Ovary (tissue), 10 donors: ENCODE measurements at regions of chrX and their contacts with region 1.

Region 1: DNA sequence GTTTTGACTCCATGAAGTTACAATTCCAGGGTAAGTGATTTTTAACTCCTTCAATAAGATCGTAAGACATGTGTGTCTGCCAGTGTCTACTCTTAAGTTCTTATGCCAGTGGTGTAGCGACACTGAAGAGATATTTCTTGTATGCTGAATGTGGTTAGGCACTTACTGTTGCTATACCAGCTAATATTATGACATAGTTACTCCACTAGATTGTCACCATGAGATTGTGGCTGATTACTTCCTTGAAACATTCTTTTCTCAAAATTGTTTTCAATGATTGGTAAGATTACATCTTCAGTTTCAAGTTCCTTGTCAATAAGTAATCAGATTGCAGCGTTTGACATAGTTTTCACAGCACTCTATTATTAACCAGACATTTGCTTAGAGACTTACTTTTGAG is 60.6 kb upstream of the PAGE5 start:
- DNase-seq: no peak
- H3K4me3 ChIP-seq: no peak overlapping the region
- H3K27ac ChIP-seq: no peak overlapping the region
- H3K4me1 ChIP-seq: no peaks in the 10 kb centered on the region
- H3K27me3 ChIP-seq: no peaks in the 10 kb centered on the region
- CTCF ChIP-seq: no peak
- EP300 ChIP-seq: no peak
- POLR2A ChIP-seq: no peak

Region 2: DNA sequence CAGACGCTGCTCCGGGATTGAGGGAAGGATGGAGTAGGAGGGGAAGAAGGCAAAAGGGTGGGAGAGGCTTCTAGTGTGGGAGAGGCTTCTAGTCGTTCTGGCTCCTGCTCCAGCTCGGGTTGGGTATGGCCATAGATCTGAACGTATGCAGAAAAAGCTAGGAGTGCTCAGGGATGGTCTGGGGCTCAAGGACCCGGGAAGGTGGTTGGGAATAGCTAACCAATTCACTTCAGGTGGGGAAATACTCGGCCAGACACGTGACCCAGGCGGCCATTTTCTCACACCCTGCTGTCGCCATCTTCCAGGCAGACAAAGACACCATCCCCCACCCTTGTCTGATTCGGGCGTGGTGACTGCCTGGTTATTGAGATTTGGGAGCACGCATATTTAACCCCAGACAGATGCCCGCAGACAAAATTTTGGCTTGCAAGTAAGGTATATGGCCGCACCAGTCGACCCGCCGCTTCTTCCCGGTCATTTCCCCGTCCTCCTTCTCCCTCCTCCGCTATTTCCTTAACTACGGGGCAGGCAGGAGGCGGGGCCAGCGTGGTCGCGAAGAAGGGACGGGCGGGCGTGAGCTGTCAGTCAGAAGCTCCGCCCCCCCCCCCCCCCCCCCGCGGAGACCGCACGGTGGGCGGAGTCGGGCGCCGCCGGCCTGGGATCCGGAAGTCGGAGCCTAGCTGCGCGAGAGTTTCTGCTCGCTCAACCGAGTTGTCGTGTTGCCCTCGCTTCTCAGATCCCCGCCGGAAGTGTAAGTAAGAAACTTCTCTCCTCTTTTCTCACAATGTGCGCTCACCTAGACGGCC is 629.8 kb before region 1 on chrX and contains the start of gene GNL3L:
- intact Hi-C with region 1: loop called in 1 of 4 experiments (anchors 10 kb)
- DNase-seq: peak; percentile 86 to 90 (median 87)
- H3K4me3 ChIP-seq: peak within 1 kb of the TSS; percentile 41
- H3K27ac ChIP-seq: peak within 1 kb of the TSS in 1 of 2 donors; percentile 58
- H3K4me1 ChIP-seq: peaks cover 1% of the 10 kb centered on the region
- H3K27me3 ChIP-seq: no peaks in the 10 kb centered on the region
- CTCF ChIP-seq: no peak
- EP300 ChIP-seq: no peak
- POLR2A ChIP-seq: peak; percentile 47
- total RNA-seq, gene GNL3L: 14.2 to 42.2 (median 24.6) TPM

Region 3: DNA sequence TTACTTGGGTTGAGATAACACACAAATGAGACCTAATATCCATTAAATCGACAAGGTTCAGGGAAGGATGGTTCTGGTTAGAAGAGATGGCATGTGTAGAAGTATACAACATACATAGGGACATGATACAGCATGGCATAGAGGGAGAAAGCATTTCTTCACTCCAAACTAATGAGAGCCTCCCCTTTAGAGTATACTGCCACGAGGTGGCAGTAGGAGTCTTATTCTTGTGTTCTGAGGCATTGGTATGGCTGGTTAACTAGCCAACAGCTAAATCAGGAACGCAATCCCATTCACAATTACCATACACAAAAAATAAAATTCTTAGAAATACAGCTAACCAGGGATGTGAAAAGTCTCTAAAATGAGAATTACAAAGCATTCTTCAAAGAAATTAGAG is 268.0 kb before region 1 on chrX:
- intact Hi-C with region 1: no loop called
- DNase-seq: peak in 1 of 5 donors; percentile 27
- H3K4me3 ChIP-seq: no peak overlapping the region
- H3K27ac ChIP-seq: no peak overlapping the region
- H3K4me1 ChIP-seq: no peaks in the 10 kb centered on the region
- H3K27me3 ChIP-seq: no peaks in the 10 kb centered on the region
- CTCF ChIP-seq: no peak
- EP300 ChIP-seq: no peak
- POLR2A ChIP-seq: no peak